Gastrocnemius medialis (tissue), 4 donors: ENCODE measurements at regions of chrX and their contacts with region 1.

Region 1: GRCh38 chrX:119943185-119943988 is at the start of gene NKAP:
- DNase-seq: peak; percentile 61 to 75
- ATAC-seq: peak; percentile 98 to 99
- H3K4me3 ChIP-seq: peak within 1 kb of the TSS; percentile 61 to 76 (median 66)
- H3K27ac ChIP-seq: peak within 1 kb of the TSS; percentile 81 to 90 (median 86)
- H3K4me1 ChIP-seq: peaks cover 6 to 15% of the 10 kb centered on the region in 2 donors
- H3K27me3 ChIP-seq: no peaks in the 10 kb centered on the region
- CTCF ChIP-seq: no peak
- POLR2A ChIP-seq: peak; percentile 40 to 46
- total RNA-seq, gene NKAP: 3.4 to 5.1 (median 4.3) TPM

Region 2: DNA sequence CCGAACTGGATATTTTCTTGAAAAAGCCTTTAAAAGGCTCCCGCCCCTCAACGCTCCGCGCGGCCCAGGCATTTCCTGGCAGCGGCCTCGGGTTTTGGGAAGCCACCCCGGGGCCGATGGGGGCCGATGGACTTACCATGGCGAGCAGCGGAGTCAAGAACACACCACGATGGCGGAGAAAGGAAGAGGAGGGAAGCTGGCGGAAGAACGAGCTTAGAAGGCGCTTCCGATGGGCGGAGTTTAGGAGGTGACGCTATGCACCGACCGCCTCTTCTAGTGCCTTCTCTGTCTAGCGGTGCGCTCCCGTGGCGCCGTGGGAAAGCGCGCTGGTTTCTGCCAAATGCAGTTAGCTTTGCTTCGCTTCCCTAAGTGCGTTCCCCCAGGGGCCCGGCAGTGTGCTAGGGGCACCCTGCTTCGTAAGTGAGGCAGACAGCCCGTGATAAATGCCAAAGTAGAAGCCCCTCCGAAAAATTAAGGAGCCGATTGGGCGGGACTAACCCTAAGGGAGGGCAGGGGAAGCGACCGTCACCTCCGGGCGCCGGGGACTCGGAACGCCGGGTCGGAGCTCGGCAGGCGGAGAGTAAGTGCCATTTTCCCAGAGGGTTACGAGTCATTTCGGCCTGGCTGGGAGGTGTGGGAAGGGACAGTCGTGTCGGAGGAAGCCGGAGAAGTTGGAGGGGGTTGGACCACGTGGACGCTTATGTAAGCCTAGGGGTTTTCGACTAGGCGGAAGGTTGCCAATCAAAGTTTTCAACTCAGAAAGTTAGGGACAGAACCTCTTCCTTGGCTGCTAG is 151.8 kb before region 1 on chrX and contains the start of gene RPL39:
- in situ Hi-C with region 1: no loop called
- intact Hi-C with region 1: loop called (anchors 1 kb)
- DNase-seq: peak; percentile 71 to 80
- ATAC-seq: peak; percentile 98
- H3K4me3 ChIP-seq: peak within 1 kb of the TSS; percentile 76 to 95 (median 82)
- H3K27ac ChIP-seq: peak within 1 kb of the TSS; percentile 94 to 96 (median 96)
- H3K4me1 ChIP-seq: peaks cover 14 to 26% of the 10 kb centered on the region in 2 donors
- H3K27me3 ChIP-seq: no peaks in the 10 kb centered on the region
- CTCF ChIP-seq: no peak
- POLR2A ChIP-seq: peak; percentile 72 to 86
- total RNA-seq, gene RPL39: 3,033 to 5,904 (median 3,913) TPM

Region 3: GRCh38 chrX:119916310-119916709 is 27.1 kb before region 1 on chrX:
- in situ Hi-C with region 1: no loop called
- intact Hi-C with region 1: no loop called
- DNase-seq: no peak
- ATAC-seq: no peak
- H3K4me3 ChIP-seq: no peak overlapping the region
- H3K27ac ChIP-seq: no peak overlapping the region
- H3K4me1 ChIP-seq: no peaks in the 10 kb centered on the region
- H3K27me3 ChIP-seq: no peaks in the 10 kb centered on the region
- CTCF ChIP-seq: no peak
- POLR2A ChIP-seq: no peak

Region 4: DNA sequence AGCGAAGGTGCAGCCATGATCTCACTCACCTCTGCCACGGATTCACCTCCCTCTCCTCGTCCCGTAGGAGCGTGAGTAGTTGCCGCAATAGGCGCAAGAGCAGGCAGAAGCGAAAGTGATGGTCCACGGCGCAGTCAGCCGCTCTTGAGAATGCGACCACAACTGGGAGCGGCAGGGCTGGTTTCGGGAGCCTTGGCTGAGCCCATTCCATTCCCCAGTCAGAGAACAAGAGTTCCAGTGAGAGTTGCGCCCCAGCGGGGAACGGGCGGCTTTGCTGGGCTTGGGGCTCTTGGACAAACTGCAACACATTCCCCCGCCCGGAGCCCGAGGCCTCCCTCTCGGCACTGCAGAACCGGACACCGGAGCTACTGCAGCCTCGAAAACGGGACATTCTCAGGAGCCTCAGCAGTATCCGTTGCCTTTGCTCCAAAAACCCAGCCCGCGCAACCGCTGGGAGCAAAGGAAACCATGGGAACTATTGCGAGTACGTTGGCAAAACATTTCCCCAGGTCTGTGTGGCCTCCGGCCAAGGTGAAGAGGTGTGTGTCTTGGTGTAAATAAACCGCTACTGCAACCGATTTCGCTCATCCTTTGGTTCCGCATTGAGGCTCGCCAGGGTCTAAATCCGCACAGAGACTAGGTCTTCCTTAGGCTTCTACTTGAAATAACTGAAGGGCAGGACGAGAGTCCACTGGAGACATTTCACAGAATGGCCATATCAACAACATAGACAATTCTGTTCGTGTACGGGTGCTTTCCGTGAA is 301.5 kb after region 1 on chrX:
- in situ Hi-C with region 1: no loop called
- intact Hi-C with region 1: loop called (anchors 10 kb)
- DNase-seq: peak; percentile 60 to 77
- ATAC-seq: peak; percentile 96 to 99
- H3K4me3 ChIP-seq: peak overlapping the region; percentile 72 to 87 (median 78)
- H3K27ac ChIP-seq: peak overlapping the region; percentile 78 to 92 (median 84)
- H3K4me1 ChIP-seq: peaks cover 7 to 10% of the 10 kb centered on the region in 2 donors
- H3K27me3 ChIP-seq: no peaks in the 10 kb centered on the region
- CTCF ChIP-seq: no peak
- POLR2A ChIP-seq: no peak